IMR-90 (cell line): ENCODE measurements at regions of chr9 and their contacts with region 1.

Region 1: DNA sequence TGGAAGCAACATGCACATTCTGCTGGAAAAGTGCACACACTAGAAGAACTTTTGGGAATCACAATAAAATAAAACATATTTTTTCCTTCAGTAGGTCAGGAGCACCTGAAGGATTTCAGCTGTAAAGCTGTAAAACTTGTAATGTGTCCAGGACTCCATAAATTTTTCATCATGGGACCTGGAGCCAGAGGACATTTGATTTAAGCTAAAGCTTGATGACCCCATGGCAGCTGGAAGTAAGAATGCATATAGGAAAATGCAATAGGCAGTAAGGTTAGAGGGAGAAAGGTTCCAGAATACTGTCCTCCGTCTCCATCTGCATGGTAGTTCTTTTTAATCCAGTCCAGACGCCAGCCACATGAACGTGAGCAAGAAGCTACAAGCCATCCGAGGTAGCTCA is 166.0 kb downstream of the ADAMTSL1 start:
- DNase-seq: no peak
- ATAC-seq: no peak
- H3K4me3 ChIP-seq: no peak overlapping the region
- H3K27ac ChIP-seq: no peak overlapping the region
- H3K4me1 ChIP-seq: peaks cover 6% of the 10 kb centered on the region
- H3K27me3 ChIP-seq: no peaks in the 10 kb centered on the region
- CTCF ChIP-seq: no peak
- POLR2A ChIP-seq: no peak
- RAD21 ChIP-seq: no peak

Region 2: DNA sequence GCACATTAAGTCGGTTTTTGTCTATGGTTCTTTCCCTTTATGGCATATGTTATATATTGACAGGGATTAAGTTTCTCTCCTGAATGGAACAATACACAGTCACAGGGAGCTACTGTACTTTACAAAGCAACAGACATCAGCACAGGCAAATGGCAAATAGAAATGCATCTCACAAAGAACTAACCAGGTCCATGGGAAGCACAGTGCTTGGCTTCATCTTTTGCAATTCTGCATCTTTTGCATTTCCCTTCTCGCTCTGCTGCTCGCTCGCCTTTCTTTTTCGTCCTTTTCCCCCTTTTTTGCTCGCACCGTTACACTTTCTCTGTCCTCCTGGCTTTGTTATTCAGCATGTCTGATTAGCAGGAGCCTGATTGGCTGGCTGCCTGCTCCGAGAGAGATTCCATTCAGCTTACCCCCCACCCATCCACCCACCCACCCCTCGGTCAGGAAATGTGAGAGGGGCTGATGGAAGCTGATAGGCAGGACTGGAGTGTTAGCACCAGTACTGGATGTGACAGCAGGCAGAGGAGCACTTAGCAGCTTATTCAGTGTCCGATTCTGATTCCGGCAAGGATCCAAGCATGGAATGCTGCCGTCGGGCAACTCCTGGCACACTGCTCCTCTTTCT is 166.1 kb before region 1 on chr9 and contains the start of gene ADAMTSL1:
- CTCF ChIA-PET with region 1: no interaction called
- POLR2A ChIA-PET with region 1: no interaction called
- dilution Hi-C with region 1: no loop called
- in situ Hi-C with region 1: no loop called
- intact Hi-C with region 1: no loop called
- DNase-seq: peak; percentile 72
- ATAC-seq: peak; percentile 69
- H3K4me3 ChIP-seq: peak within 1 kb of the TSS; percentile 47
- H3K27ac ChIP-seq: no peak within 1 kb of the TSS
- H3K4me1 ChIP-seq: peaks cover 4% of the 10 kb centered on the region; the same call in 1 of the 2 replicates
- H3K27me3 ChIP-seq: no peaks in the 10 kb centered on the region
- CTCF ChIP-seq: no peak
- POLR2A ChIP-seq: no peak
- RAD21 ChIP-seq: no peak
- total RNA-seq, gene ADAMTSL1: 49.2 and 62.2 TPM in 2 replicates

Region 3: DNA sequence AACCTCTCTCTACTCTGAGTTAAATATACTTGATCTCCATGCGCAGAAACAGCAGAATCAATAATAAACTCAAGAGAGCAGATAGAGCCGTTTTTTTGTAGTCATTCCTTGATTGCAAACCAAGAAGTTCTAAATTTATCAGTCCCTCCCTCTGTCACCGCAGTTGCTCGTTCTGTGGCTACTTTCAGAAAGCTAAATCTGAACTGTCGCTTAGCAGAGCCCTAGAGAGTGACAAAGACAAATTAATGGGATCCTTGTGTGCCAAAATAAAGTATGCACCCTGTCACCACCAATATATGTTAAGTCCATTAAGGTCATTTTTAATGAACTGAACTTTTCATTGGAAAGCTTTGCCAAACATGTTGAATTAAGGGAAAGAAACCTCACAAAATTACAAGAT is 52.4 kb after region 1 on chr9:
- CTCF ChIA-PET with region 1: no interaction called
- POLR2A ChIA-PET with region 1: no interaction called
- dilution Hi-C with region 1: no loop called
- in situ Hi-C with region 1: no loop called
- intact Hi-C with region 1: loop called (anchors 5 kb)
- DNase-seq: no peak
- ATAC-seq: no peak
- H3K4me3 ChIP-seq: no peak overlapping the region
- H3K27ac ChIP-seq: no peak overlapping the region
- H3K4me1 ChIP-seq: no peaks in the 10 kb centered on the region
- H3K27me3 ChIP-seq: no peaks in the 10 kb centered on the region
- CTCF ChIP-seq: no peak
- POLR2A ChIP-seq: no peak
- RAD21 ChIP-seq: no peak

Region 4: GRCh38 chr9:19022206-19022605 is 382.3 kb after region 1 on chr9:
- CTCF ChIA-PET with region 1: no interaction called
- POLR2A ChIA-PET with region 1: no interaction called
- dilution Hi-C with region 1: no loop called
- in situ Hi-C with region 1: no loop called
- intact Hi-C with region 1: no loop called
- DNase-seq: no peak
- ATAC-seq: no peak
- H3K4me3 ChIP-seq: no peak overlapping the region
- H3K27ac ChIP-seq: no peak overlapping the region
- H3K4me1 ChIP-seq: no peaks in the 10 kb centered on the region
- H3K27me3 ChIP-seq: peaks cover 12% of the 10 kb centered on the region
- CTCF ChIP-seq: no peak
- POLR2A ChIP-seq: no peak
- RAD21 ChIP-seq: no peak